ENCODE measurements at regions of chr5 and their contacts with region 1.

Region 1: DNA sequence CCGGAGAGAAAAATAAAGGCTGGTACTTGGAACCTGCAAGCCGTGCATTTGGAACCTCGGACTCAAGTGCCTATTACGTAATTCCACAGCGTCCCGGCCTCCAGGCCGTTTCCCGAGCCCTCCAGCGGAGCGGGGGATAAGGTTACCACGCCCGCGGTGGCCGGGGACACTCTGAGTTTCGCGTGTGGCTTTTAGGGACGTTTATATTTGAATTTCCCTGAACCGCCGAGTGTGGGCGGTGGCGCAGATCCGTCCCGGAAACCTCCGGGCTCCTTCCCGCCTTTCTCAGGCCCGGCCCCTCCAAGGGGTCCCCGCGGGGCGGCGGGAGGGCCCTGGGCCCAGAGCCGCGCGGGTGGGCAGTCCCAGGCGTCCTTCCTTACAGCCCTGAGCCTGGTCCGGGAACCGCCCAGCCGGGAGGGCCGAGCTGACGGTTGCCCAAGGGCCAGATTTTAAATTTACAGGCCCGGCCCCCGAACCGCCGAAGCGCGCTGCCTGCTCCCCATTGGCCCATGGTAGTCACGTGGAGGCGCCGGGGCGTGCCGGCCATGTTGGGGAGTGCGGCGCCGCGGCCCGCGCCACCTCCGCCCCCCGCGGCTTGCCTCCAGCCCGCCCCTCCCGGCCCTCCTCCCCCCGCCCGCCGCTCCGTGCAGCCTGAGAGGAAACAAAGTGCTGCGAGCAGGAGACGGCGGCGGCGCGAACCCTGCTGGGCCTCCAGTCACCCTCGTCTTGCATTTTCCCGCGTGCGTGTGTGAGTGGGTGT is at the start of gene LMNB1:
- DNase-seq: peak; percentile 90 to 95 (median 93)
- H3K4me3 ChIP-seq: peak within 1 kb of the TSS; percentile 97
- H3K4me3 Mint-ChIP-seq: peak within 1 kb of the TSS; percentile 83 to 96 (median 93)
- H3K27ac ChIP-seq: peak within 1 kb of the TSS; percentile 96
- H3K27ac Mint-ChIP-seq: peak within 1 kb of the TSS; percentile 92 to 98 (median 95)
- H3K4me1 ChIP-seq: peaks cover 20% of the 10 kb centered on the region
- H3K4me1 Mint-ChIP-seq: peaks cover 26 to 29% (median 29%) of the 10 kb centered on the region in 3 donors
- H3K27me3 ChIP-seq: no peaks in the 10 kb centered on the region
- H3K27me3 Mint-ChIP-seq: peaks cover 0 to 1% of the 10 kb centered on the region in 2 donors
- total RNA-seq, gene LMNB1: 172 to 178 TPM

Region 2: GRCh38 chr5:126600631-126601511 is 175.8 kb before region 1 on chr5 and contains the start of gene PHAX:
- CTCF ChIA-PET with region 1: interaction called, 10 read pairs
- POLR2A ChIA-PET with region 1: interaction called, 11 read pairs
- DNase-seq: peak; percentile 57 to 74 (median 69)
- H3K4me3 ChIP-seq: peak within 1 kb of the TSS; percentile 74
- H3K4me3 Mint-ChIP-seq: peak within 1 kb of the TSS; percentile 89 to 100 (median 97)
- H3K27ac ChIP-seq: peak within 1 kb of the TSS; percentile 86
- H3K27ac Mint-ChIP-seq: peak within 1 kb of the TSS; percentile 71 to 100 (median 97)
- H3K4me1 ChIP-seq: peaks cover 22% of the 10 kb centered on the region
- H3K4me1 Mint-ChIP-seq: peaks cover 28 to 44% (median 40%) of the 10 kb centered on the region in 3 donors
- H3K27me3 ChIP-seq: no peaks in the 10 kb centered on the region
- H3K27me3 Mint-ChIP-seq: peaks cover 0 to 4% of the 10 kb centered on the region in 2 donors
- total RNA-seq, gene PHAX: 59.2 to 68.2 TPM

Region 3: GRCh38 chr5:126676195-126676624 is 100.5 kb before region 1 on chr5:
- CTCF ChIA-PET with region 1: interaction called, 179 read pairs
- POLR2A ChIA-PET with region 1: interaction called, 6 read pairs
- DNase-seq: peak; percentile 40 to 77 (median 60)
- H3K4me3 ChIP-seq: no peak overlapping the region
- H3K4me3 Mint-ChIP-seq: no peak overlapping the region
- H3K27ac ChIP-seq: no peak overlapping the region
- H3K27ac Mint-ChIP-seq: no peak overlapping the region
- H3K4me1 ChIP-seq: no peaks in the 10 kb centered on the region
- H3K4me1 Mint-ChIP-seq: peaks cover 3 to 5% (median 4%) of the 10 kb centered on the region in 3 donors
- H3K27me3 ChIP-seq: no peaks in the 10 kb centered on the region
- H3K27me3 Mint-ChIP-seq: peaks cover 0 to 1% of the 10 kb centered on the region in 2 donors

Region 4: GRCh38 chr5:126741361-126741760 is 35.3 kb before region 1 on chr5:
- CTCF ChIA-PET with region 1: no interaction called
- POLR2A ChIA-PET with region 1: no interaction called
- DNase-seq: no peak
- H3K4me3 ChIP-seq: no peak overlapping the region
- H3K4me3 Mint-ChIP-seq: no peak overlapping the region
- H3K27ac ChIP-seq: no peak overlapping the region
- H3K27ac Mint-ChIP-seq: no peak overlapping the region
- H3K4me1 ChIP-seq: no peaks in the 10 kb centered on the region
- H3K4me1 Mint-ChIP-seq: no peaks in the 10 kb centered on the region
- H3K27me3 ChIP-seq: no peaks in the 10 kb centered on the region
- H3K27me3 Mint-ChIP-seq: peaks cover 0 to 4% of the 10 kb centered on the region in 2 donors

Region 5: DNA sequence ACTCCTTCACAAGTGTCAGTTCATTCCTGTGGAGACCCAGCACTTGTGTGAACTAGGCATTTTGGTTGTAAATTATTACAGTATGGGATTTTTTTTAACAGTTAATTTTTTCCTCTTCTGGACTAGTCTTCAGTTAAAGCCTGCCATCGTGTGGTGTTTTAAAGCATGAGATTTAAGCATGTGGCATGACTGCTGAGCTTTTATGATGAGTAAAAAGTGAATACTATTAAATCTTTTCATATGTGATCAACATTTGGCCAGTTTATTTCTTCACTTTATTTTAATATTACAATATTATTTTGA is 25.3 kb after region 1 on chr5:
- CTCF ChIA-PET with region 1: interaction called, 13 read pairs
- POLR2A ChIA-PET with region 1: no interaction called
- DNase-seq: peak in 1 of 5 donors; percentile 7
- H3K4me3 ChIP-seq: no peak overlapping the region
- H3K4me3 Mint-ChIP-seq: no peak overlapping the region
- H3K27ac ChIP-seq: no peak overlapping the region
- H3K27ac Mint-ChIP-seq: no peak overlapping the region
- H3K4me1 ChIP-seq: no peaks in the 10 kb centered on the region
- H3K4me1 Mint-ChIP-seq: peaks cover 22 to 50% (median 44%) of the 10 kb centered on the region in 3 donors
- H3K27me3 ChIP-seq: no peaks in the 10 kb centered on the region
- H3K27me3 Mint-ChIP-seq: no peaks in the 10 kb centered on the region

Region 6: DNA sequence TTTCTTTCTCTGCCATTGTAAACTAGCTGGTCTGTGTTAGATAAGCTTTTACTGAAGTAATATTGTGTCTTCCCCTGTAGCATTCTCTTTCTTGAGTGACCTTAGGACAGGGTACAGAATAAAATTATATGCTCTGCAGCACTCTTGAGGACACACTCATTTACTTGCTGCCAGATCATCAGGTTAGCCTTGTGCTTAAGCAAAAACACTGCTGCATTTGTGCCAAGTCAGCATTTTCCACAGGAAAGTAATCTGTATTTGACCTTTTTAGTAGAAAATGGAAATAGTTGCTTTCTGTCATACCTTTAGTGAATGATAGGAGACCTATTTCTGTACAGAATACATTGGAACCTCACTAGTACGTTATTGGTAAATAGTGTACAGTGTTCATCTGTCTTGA is 54.5 kb after region 1 on chr5:
- CTCF ChIA-PET with region 1: no interaction called
- POLR2A ChIA-PET with region 1: no interaction called
- DNase-seq: no peak
- H3K4me3 ChIP-seq: no peak overlapping the region
- H3K4me3 Mint-ChIP-seq: no peak overlapping the region
- H3K27ac ChIP-seq: no peak overlapping the region
- H3K27ac Mint-ChIP-seq: no peak overlapping the region
- H3K4me1 ChIP-seq: no peaks in the 10 kb centered on the region
- H3K4me1 Mint-ChIP-seq: peaks cover 0 to 4% (median 0%) of the 10 kb centered on the region in 3 donors
- H3K27me3 ChIP-seq: no peaks in the 10 kb centered on the region
- H3K27me3 Mint-ChIP-seq: no peaks in the 10 kb centered on the region

Region 7: DNA sequence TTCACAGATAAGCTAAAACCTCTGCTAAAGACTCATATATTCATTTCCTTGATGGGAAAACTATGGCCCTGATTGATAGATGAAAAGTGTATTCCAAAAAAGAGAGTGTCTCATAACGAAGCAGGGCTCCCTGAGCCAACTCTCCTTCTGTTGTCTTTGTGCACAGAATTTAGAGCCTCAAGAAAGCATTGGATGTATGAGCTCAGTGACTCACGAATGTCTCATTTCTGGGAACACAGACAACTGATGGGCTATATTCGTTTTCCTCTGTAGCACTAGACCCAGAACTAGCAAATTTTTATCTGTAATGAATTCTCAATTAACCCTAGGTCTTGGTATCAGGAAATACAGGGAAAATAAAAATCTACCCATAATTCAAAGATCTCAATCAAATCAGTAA is 88.6 kb after region 1 on chr5:
- CTCF ChIA-PET with region 1: no interaction called
- POLR2A ChIA-PET with region 1: no interaction called
- DNase-seq: no peak
- H3K4me3 ChIP-seq: no peak overlapping the region
- H3K4me3 Mint-ChIP-seq: no peak overlapping the region
- H3K27ac ChIP-seq: no peak overlapping the region
- H3K27ac Mint-ChIP-seq: no peak overlapping the region
- H3K4me1 ChIP-seq: peaks cover 6% of the 10 kb centered on the region
- H3K4me1 Mint-ChIP-seq: peaks cover 10 to 11% (median 10%) of the 10 kb centered on the region in 3 donors
- H3K27me3 ChIP-seq: no peaks in the 10 kb centered on the region
- H3K27me3 Mint-ChIP-seq: no peaks in the 10 kb centered on the region

Region 8: GRCh38 chr5:127229185-127229889 is 452.7 kb after region 1 on chr5:
- CTCF ChIA-PET with region 1: no interaction called
- POLR2A ChIA-PET with region 1: interaction called, 14 read pairs
- DNase-seq: peak; percentile 7 to 60 (median 47)
- H3K4me3 ChIP-seq: peak overlapping the region; percentile 59
- H3K4me3 Mint-ChIP-seq: peak overlapping the region; percentile 44 to 86 (median 79)
- H3K27ac ChIP-seq: no peak overlapping the region
- H3K27ac Mint-ChIP-seq: peak overlapping the region; percentile 29 to 97 (median 68)
- H3K4me1 ChIP-seq: peaks cover 12% of the 10 kb centered on the region
- H3K4me1 Mint-ChIP-seq: peaks cover 8 to 24% (median 22%) of the 10 kb centered on the region in 3 donors
- H3K27me3 ChIP-seq: no peaks in the 10 kb centered on the region
- H3K27me3 Mint-ChIP-seq: no peaks in the 10 kb centered on the region